Ascending aorta (tissue), 2 donors: ENCODE measurements at regions of chr14 and their contacts with region 1.

Region 1: GRCh38 chr14:81784084-81784483 is 250.4 kb upstream of the SEL1L start:
- DNase-seq: peak; percentile 25 to 81
- H3K4me3 ChIP-seq: no peak overlapping the region
- H3K27ac ChIP-seq: peak overlapping the region in 1 of 2 donors; percentile 41
- H3K4me1 ChIP-seq: no peaks in the 10 kb centered on the region
- H3K27me3 ChIP-seq: no peaks in the 10 kb centered on the region
- CTCF ChIP-seq: no peak

Region 2: GRCh38 chr14:81802341-81802740 is 18.3 kb after region 1 on chr14:
- intact Hi-C with region 1: no loop called
- DNase-seq: no peak
- H3K4me3 ChIP-seq: no peak overlapping the region
- H3K27ac ChIP-seq: peak overlapping the region; percentile 4 to 12
- H3K4me1 ChIP-seq: peaks cover 0 to 3% of the 10 kb centered on the region in 2 donors
- H3K27me3 ChIP-seq: no peaks in the 10 kb centered on the region
- CTCF ChIP-seq: no peak

Region 3: DNA sequence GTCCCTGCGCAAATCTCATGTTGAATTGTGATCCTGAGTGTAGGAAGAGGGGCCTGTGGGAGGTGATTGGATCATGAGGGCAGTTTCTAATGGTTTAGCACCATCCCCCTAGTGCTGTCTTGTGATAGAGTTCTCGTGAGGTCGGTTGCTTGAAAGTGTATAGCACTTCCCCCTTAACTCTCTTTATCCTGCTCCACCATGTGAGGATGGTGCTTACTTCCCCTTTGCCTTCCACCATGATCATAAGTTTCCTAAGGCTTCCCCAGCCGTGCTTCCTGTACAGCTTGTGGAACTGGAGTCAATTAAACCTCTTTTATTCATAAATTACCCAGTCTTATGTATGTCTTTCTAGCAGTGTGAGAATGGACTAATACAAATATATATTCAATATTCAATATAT is 53.2 kb after region 1 on chr14:
- intact Hi-C with region 1: no loop called
- DNase-seq: no peak
- H3K4me3 ChIP-seq: no peak overlapping the region
- H3K27ac ChIP-seq: no peak overlapping the region
- H3K4me1 ChIP-seq: no peaks in the 10 kb centered on the region
- H3K27me3 ChIP-seq: no peaks in the 10 kb centered on the region
- CTCF ChIP-seq: no peak

Region 4: GRCh38 chr14:82366803-82367202 is 582.7 kb after region 1 on chr14:
- intact Hi-C with region 1: loop called (anchors 10 kb)
- DNase-seq: no peak
- H3K4me3 ChIP-seq: no peak overlapping the region
- H3K27ac ChIP-seq: no peak overlapping the region
- H3K4me1 ChIP-seq: no peaks in the 10 kb centered on the region
- H3K27me3 ChIP-seq: no peaks in the 10 kb centered on the region
- CTCF ChIP-seq: no peak